B cell (primary cell): ENCODE measurements at regions of chr5 and their contacts with region 1.

Region 1: DNA sequence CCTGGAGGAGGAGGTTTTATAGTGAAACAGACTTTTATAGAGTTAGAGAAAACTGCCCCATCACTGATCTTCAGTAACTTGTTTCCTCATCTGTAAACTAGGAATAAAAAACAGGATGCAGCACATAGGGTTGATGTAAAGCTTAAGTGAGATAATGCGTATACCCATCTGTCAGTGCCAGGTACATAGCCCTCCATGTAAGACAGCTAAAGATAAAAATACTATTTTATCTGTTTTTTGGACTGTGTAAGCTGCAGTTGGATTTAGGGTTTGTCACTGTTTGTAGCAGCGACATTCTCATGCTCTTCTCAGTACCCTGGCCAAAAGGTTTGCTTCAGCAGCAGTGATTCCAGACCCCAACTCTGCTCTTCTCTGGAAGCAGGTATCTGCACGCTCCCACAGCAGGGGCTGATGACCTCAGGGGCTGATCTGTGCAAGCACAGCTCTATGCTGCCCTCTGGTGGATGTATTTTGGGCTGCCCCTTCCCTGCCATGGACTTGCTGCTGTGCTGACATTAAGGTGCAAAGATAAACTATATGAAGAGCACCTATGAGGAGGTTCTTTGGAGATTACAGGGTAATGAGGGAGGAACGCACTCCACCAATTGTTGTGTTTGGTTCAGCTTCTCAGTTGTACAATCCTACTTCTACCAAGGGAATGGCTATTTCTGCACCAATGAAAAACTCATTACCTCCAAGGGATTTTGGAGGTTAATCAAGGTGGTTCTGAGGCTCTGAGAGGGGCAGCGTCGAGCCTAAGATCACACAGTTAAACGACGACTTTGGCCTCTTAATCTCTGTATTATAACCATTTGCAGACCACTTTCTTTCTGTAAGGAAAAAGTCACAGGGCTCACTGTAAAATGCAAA is 13.1 kb downstream of the HMHB1 start:
- DNase-seq: peak; percentile 85
- ATAC-seq: peak; percentile 96
- H3K4me3 ChIP-seq: no peak overlapping the region
- H3K4me3 Mint-ChIP-seq: no peak overlapping the region
- H3K27ac ChIP-seq: no peak overlapping the region
- H3K27ac Mint-ChIP-seq: no peak overlapping the region
- H3K4me1 ChIP-seq: peaks cover 3 to 5% of the 10 kb centered on the region in 2 donors
- H3K4me1 Mint-ChIP-seq: peaks cover 8% of the 10 kb centered on the region
- H3K27me3 ChIP-seq: no peaks in the 10 kb centered on the region
- H3K27me3 Mint-ChIP-seq: no peaks in the 10 kb centered on the region
- CTCF ChIP-seq: peak; percentile 95

Region 2: DNA sequence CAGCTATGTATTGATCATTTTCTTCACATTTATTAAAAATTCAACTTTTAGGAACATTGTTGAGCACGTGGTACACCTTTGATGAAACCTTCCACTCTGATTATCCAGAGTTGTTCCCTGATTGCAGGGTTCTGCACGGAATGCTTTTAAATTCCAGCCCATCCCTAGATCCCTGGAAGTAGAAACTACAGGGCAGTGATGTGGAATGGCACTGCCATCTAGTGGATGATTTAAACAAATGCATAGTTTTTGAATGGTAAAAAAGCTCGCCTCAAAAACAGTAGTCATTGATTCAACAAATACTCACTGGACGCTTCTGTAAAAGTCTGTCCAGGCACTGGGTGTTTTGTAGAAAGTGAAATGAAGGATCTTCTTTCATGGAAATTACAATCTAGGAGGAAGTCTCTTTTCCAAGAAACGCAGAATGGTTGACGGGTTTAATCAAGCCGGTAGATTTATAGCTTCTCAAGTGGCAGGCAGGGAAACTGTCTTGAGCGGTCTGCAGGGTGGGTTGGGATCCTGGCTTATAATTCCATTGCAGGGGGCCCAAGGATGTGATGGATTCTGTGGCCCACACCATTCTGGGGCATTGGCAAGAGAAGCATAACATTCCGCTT is 936.5 kb before region 1 on chr5:
- CTCF ChIA-PET with region 1: interaction called, 18 read pairs
- POLR2A ChIA-PET with region 1: no interaction called
- intact Hi-C with region 1: no loop called
- DNase-seq: peak; percentile 48
- ATAC-seq: peak; percentile 28
- H3K4me3 ChIP-seq: no peak overlapping the region
- H3K4me3 Mint-ChIP-seq: no peak overlapping the region
- H3K27ac ChIP-seq: no peak overlapping the region
- H3K27ac Mint-ChIP-seq: no peak overlapping the region
- H3K4me1 ChIP-seq: no peaks in the 10 kb centered on the region
- H3K4me1 Mint-ChIP-seq: no peaks in the 10 kb centered on the region
- H3K27me3 ChIP-seq: no peaks in the 10 kb centered on the region
- H3K27me3 Mint-ChIP-seq: no peaks in the 10 kb centered on the region
- CTCF ChIP-seq: peak; percentile 84

Region 3: DNA sequence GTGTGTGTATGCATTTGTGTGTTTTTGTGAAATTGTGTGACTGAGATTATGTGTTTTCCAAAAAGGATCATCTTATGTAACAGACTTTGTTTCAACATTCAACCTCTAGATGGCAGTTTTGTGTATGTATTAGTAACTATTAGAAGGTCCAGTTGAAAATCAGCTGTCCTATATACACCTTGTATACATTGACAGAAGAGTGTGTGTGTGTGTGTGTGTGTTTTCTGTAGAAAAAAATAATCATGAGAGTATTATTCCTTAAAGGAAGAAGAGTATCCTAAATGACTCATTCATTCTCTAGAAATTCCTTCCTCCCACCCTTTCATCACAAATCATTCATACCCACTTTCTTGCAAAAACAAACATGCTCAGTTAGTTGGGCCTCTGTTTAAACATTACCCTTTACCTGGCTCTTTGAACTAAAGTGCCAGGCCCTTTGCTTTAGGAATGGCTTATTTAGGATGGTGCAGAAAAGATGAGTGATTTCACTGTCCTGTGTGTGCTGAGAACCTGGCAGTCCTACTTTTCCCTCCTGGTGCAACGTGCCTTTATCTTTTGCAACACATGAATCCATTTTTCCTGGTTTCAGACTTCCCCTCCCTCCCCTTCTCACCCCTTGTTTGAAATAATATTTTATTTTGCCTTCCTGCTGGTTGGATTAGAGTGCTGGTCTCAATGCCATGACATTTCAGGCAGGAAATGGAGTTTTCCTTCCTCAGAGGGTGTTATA is 902.7 kb before region 1 on chr5:
- CTCF ChIA-PET with region 1: interaction called, 123 read pairs
- POLR2A ChIA-PET with region 1: no interaction called
- intact Hi-C with region 1: loop called (anchors 1 kb)
- DNase-seq: peak; percentile 43
- ATAC-seq: peak; percentile 60
- H3K4me3 ChIP-seq: no peak overlapping the region
- H3K4me3 Mint-ChIP-seq: no peak overlapping the region
- H3K27ac ChIP-seq: no peak overlapping the region
- H3K27ac Mint-ChIP-seq: no peak overlapping the region
- H3K4me1 ChIP-seq: no peaks in the 10 kb centered on the region
- H3K4me1 Mint-ChIP-seq: peaks cover 7% of the 10 kb centered on the region
- H3K27me3 ChIP-seq: no peaks in the 10 kb centered on the region
- H3K27me3 Mint-ChIP-seq: no peaks in the 10 kb centered on the region
- CTCF ChIP-seq: peak; percentile 55

Region 4: DNA sequence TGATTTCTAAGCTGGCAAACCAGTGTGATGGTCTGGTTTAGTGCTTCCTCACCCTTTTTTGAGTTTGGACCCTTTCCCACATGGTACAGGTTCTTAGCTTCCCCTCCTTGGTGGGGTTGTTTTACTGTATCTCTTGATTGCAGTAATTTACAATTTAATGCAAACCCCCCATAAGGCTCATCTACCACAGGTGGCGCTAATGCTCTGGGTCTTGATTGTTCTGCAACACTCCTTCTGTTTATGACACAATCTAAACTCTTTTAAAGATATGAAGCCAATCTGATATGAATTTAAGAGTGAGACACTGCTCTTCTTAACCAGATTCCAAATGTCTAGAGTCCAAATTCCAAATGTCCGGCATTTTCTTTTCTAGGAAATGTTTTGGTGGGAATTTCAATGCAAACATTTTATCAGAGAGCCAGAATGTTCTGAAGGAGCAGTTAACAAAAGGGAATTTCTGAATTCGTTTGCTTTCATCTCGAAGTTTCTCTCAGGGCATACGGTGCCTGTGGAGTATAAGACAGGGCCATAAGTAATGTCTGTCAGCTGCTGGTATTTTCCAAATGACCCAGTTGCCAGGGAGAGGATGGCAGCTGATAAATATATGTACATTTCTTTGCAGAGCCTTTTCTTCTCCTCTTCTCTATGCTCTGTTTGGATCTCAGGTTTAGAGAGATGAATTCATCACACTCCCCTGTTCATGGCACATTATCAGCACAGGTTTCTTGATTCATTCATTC is 808.1 kb before region 1 on chr5:
- CTCF ChIA-PET with region 1: interaction called, 7 read pairs
- POLR2A ChIA-PET with region 1: no interaction called
- intact Hi-C with region 1: loop called (anchors 1 kb)
- DNase-seq: peak; percentile 46
- ATAC-seq: no peak
- H3K4me3 ChIP-seq: no peak overlapping the region
- H3K4me3 Mint-ChIP-seq: no peak overlapping the region
- H3K27ac ChIP-seq: no peak overlapping the region
- H3K27ac Mint-ChIP-seq: no peak overlapping the region
- H3K4me1 ChIP-seq: no peaks in the 10 kb centered on the region
- H3K4me1 Mint-ChIP-seq: peaks cover 11% of the 10 kb centered on the region
- H3K27me3 ChIP-seq: no peaks in the 10 kb centered on the region
- H3K27me3 Mint-ChIP-seq: no peaks in the 10 kb centered on the region
- CTCF ChIP-seq: peak; percentile 52

Region 5: GRCh38 chr5:143279698-143280097 is 545.4 kb before region 1 on chr5:
- CTCF ChIA-PET with region 1: no interaction called
- POLR2A ChIA-PET with region 1: no interaction called
- intact Hi-C with region 1: loop called (anchors 10 kb)
- DNase-seq: no peak
- ATAC-seq: no peak
- H3K4me3 ChIP-seq: no peak overlapping the region
- H3K4me3 Mint-ChIP-seq: no peak overlapping the region
- H3K27ac ChIP-seq: no peak overlapping the region
- H3K27ac Mint-ChIP-seq: no peak overlapping the region
- H3K4me1 ChIP-seq: peaks cover 3 to 11% of the 10 kb centered on the region in 2 donors
- H3K4me1 Mint-ChIP-seq: peaks cover 19% of the 10 kb centered on the region
- H3K27me3 ChIP-seq: no peaks in the 10 kb centered on the region
- H3K27me3 Mint-ChIP-seq: no peaks in the 10 kb centered on the region
- CTCF ChIP-seq: no peak

Region 6: DNA sequence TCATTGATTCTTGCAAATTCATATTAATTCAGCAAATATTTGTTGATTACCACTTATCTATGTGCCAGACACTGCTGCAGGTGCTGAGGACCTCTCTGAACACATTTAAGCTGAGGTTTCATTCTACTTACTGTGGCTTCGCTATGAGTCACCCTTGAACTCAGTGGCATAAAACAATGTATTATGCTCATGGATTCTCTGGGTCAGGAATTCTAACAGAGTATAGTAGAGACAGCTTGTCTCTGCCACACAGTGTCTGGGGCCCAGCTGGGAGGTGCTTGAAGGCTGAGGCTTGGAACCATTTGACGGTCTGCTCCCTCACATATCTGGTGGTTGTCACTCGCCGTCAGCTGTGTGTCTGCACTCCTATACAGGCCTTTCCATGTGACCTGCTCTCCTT is 297.3 kb before region 1 on chr5:
- CTCF ChIA-PET with region 1: no interaction called
- POLR2A ChIA-PET with region 1: no interaction called
- intact Hi-C with region 1: no loop called
- DNase-seq: no peak
- ATAC-seq: no peak
- H3K4me3 ChIP-seq: no peak overlapping the region
- H3K4me3 Mint-ChIP-seq: no peak overlapping the region
- H3K27ac ChIP-seq: no peak overlapping the region
- H3K27ac Mint-ChIP-seq: no peak overlapping the region
- H3K4me1 ChIP-seq: no peaks in the 10 kb centered on the region
- H3K4me1 Mint-ChIP-seq: no peaks in the 10 kb centered on the region
- H3K27me3 ChIP-seq: no peaks in the 10 kb centered on the region
- H3K27me3 Mint-ChIP-seq: no peaks in the 10 kb centered on the region
- CTCF ChIP-seq: no peak

Region 7: GRCh38 chr5:143769026-143769786 is 55.9 kb before region 1 on chr5:
- CTCF ChIA-PET with region 1: no interaction called
- POLR2A ChIA-PET with region 1: no interaction called
- intact Hi-C with region 1: no loop called
- DNase-seq: no peak
- ATAC-seq: no peak
- H3K4me3 ChIP-seq: no peak overlapping the region
- H3K4me3 Mint-ChIP-seq: no peak overlapping the region
- H3K27ac ChIP-seq: no peak overlapping the region
- H3K27ac Mint-ChIP-seq: no peak overlapping the region
- H3K4me1 ChIP-seq: no peaks in the 10 kb centered on the region
- H3K4me1 Mint-ChIP-seq: no peaks in the 10 kb centered on the region
- H3K27me3 ChIP-seq: peaks cover 0 to 4% (median under 1%) of the 10 kb centered on the region in 4 experiments
- H3K27me3 Mint-ChIP-seq: peaks cover 3% of the 10 kb centered on the region
- CTCF ChIP-seq: no peak

Region 8: GRCh38 chr5:143837306-143837848 is 12.3 kb after region 1 on chr5:
- CTCF ChIA-PET with region 1: interaction called, 27 read pairs
- POLR2A ChIA-PET with region 1: no interaction called
- intact Hi-C with region 1: no loop called
- DNase-seq: no peak
- ATAC-seq: no peak
- H3K4me3 ChIP-seq: no peak overlapping the region
- H3K4me3 Mint-ChIP-seq: no peak overlapping the region
- H3K27ac ChIP-seq: no peak overlapping the region
- H3K27ac Mint-ChIP-seq: no peak overlapping the region
- H3K4me1 ChIP-seq: no peaks in the 10 kb centered on the region
- H3K4me1 Mint-ChIP-seq: no peaks in the 10 kb centered on the region
- H3K27me3 ChIP-seq: peaks cover 0 to 4% (median 0%) of the 10 kb centered on the region in 4 experiments
- H3K27me3 Mint-ChIP-seq: peaks cover 6% of the 10 kb centered on the region
- CTCF ChIP-seq: no peak

Region 9: GRCh38 chr5:143946837-143947236 is 121.8 kb after region 1 on chr5:
- CTCF ChIA-PET with region 1: no interaction called
- POLR2A ChIA-PET with region 1: no interaction called
- intact Hi-C with region 1: no loop called
- DNase-seq: no peak
- ATAC-seq: no peak
- H3K4me3 ChIP-seq: no peak overlapping the region
- H3K4me3 Mint-ChIP-seq: no peak overlapping the region
- H3K27ac ChIP-seq: no peak overlapping the region
- H3K27ac Mint-ChIP-seq: no peak overlapping the region
- H3K4me1 ChIP-seq: no peaks in the 10 kb centered on the region
- H3K4me1 Mint-ChIP-seq: no peaks in the 10 kb centered on the region
- H3K27me3 ChIP-seq: no peaks in the 10 kb centered on the region
- H3K27me3 Mint-ChIP-seq: peaks cover 15% of the 10 kb centered on the region
- CTCF ChIP-seq: no peak

Region 10: GRCh38 chr5:144072518-144072927 is 247.4 kb after region 1 on chr5:
- CTCF ChIA-PET with region 1: no interaction called
- POLR2A ChIA-PET with region 1: no interaction called
- intact Hi-C with region 1: no loop called
- DNase-seq: no peak
- ATAC-seq: no peak
- H3K4me3 ChIP-seq: no peak overlapping the region
- H3K4me3 Mint-ChIP-seq: no peak overlapping the region
- H3K27ac ChIP-seq: no peak overlapping the region
- H3K27ac Mint-ChIP-seq: no peak overlapping the region
- H3K4me1 ChIP-seq: no peaks in the 10 kb centered on the region
- H3K4me1 Mint-ChIP-seq: no peaks in the 10 kb centered on the region
- H3K27me3 ChIP-seq: peaks cover 0 to 7% (median 0%) of the 10 kb centered on the region in 4 experiments
- H3K27me3 Mint-ChIP-seq: peaks cover 16% of the 10 kb centered on the region
- CTCF ChIP-seq: no peak